Aorta (tissue), 5 donors: ENCODE measurements at regions of chr9 and their contacts with region 1.

Region 1: DNA sequence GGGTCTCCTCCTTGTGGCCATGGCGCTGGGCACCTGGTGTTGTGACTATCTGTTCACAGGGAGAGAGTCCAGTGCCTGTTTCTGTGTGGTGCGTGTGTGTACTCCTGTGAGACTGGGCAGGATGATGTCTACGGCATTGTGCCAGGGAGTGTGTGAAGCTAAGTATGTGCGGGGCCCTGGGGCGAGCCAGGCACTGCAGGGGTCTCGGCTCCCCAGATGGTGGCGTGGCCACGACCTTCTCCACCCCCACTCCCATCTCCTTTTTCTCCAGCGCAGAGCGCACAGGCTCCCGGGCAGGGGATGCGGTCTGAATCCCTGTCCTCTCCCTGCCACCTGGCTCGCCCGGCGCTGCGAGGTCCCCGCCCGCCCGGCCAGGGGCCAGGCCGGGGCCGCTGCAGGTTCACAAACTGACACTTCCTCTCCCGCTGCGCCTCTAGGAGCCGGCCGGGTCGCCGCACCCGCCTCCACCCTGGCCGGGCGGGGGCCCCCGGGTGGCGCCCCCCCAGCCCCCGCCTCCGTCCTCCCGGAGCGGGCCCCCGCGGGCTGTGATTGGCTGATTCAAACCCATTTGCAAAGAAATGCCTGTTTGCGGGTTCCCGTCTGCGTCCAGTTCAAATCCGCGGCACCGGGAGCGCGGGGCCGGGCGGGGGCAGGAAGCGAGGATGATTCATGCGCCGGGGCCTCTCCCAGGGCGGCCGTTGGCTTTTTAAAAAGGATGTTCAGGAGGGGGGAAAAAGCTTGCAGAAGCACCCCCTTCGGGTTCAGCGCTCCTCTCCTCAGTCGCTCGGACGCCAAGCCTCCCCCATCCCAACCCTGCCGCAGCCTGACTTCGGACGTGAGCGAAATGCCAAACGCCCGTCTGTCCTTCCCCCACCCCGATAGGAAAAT is 790 bp downstream of the PHF19 start:
- DNase-seq: peak; percentile 94 to 95
- ATAC-seq: peak; percentile 81
- H3K4me3 ChIP-seq: peak overlapping the region; percentile 68 to 92
- H3K27ac ChIP-seq: peak overlapping the region; percentile 68 to 85
- H3K4me1 ChIP-seq: no peaks in the 10 kb centered on the region
- H3K27me3 ChIP-seq: no peaks in the 10 kb centered on the region

Region 2: DNA sequence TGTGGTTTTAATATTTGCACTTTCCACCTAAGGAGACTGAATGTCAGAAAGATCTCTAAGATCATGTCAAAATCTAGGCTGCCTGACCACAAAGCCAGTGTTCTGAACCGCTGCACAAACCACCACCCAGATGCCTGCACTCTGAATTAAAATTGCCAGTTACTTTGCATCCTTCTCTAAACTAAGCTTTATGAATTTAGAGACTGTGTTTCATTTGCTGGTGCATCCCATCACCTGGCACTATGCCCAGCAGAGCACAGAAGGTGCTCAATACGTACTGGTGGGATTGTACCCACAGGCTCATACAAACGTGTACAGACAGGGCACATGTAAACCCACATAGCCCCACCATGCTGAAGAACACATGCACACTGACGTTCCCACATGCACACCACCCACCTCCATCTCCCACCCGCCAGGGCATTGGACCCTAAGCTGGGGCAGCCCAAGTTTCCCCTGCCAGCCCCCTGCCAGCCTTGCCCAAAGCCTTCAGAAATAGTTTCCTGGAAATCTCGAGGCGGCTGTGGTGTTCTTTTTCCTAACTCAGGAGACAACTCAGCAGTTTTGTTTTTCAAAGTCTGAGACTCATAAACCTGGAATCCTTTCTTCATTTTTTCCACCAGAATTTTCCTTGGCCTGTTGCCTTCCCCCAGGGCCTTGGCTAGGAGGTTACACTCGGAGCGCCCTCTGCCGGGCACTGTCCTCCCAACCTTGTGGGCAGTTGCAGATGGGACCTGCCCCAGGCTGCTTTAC is 60.0 kb after region 1 on chr9:
- intact Hi-C with region 1: loop called (anchors 2 to 5 kb)
- DNase-seq: peak; percentile 96 to 99
- ATAC-seq: peak; percentile 91
- H3K4me3 ChIP-seq: no peak overlapping the region
- H3K27ac ChIP-seq: peak overlapping the region; percentile 90 to 100
- H3K4me1 ChIP-seq: peaks cover 10% of the 10 kb centered on the region in 2 donors
- H3K27me3 ChIP-seq: no peaks in the 10 kb centered on the region

Region 3: GRCh38 chr9:120965344-120966012 is 89.3 kb after region 1 on chr9:
- intact Hi-C with region 1: no loop called
- DNase-seq: no peak
- ATAC-seq: peak; percentile 79
- H3K4me3 ChIP-seq: no peak overlapping the region
- H3K27ac ChIP-seq: peak overlapping the region; percentile 49 to 93
- H3K4me1 ChIP-seq: peaks cover 5 to 6% of the 10 kb centered on the region in 2 donors
- H3K27me3 ChIP-seq: no peaks in the 10 kb centered on the region